Ascending aorta (tissue), 2 donors: ENCODE measurements at regions of chr18 and their contacts with region 1.

Region 1: GRCh38 chr18:44826418-44827259 is 146.0 kb downstream of the SETBP1 start:
- DNase-seq: peak; percentile 15 to 85
- H3K4me3 ChIP-seq: no peak overlapping the region
- H3K27ac ChIP-seq: peak overlapping the region; percentile 73 to 83
- H3K4me1 ChIP-seq: peaks cover 6 to 22% of the 10 kb centered on the region in 2 donors
- H3K27me3 ChIP-seq: no peaks in the 10 kb centered on the region
- CTCF ChIP-seq: no peak

Region 2: GRCh38 chr18:44747157-44747556 is 79.5 kb before region 1 on chr18:
- intact Hi-C with region 1: no loop called
- DNase-seq: no peak
- H3K4me3 ChIP-seq: no peak overlapping the region
- H3K27ac ChIP-seq: peak overlapping the region in 1 of 2 donors; percentile 16
- H3K4me1 ChIP-seq: peaks cover 0 to 17% of the 10 kb centered on the region in 2 donors
- H3K27me3 ChIP-seq: no peaks in the 10 kb centered on the region
- CTCF ChIP-seq: no peak

Region 3: DNA sequence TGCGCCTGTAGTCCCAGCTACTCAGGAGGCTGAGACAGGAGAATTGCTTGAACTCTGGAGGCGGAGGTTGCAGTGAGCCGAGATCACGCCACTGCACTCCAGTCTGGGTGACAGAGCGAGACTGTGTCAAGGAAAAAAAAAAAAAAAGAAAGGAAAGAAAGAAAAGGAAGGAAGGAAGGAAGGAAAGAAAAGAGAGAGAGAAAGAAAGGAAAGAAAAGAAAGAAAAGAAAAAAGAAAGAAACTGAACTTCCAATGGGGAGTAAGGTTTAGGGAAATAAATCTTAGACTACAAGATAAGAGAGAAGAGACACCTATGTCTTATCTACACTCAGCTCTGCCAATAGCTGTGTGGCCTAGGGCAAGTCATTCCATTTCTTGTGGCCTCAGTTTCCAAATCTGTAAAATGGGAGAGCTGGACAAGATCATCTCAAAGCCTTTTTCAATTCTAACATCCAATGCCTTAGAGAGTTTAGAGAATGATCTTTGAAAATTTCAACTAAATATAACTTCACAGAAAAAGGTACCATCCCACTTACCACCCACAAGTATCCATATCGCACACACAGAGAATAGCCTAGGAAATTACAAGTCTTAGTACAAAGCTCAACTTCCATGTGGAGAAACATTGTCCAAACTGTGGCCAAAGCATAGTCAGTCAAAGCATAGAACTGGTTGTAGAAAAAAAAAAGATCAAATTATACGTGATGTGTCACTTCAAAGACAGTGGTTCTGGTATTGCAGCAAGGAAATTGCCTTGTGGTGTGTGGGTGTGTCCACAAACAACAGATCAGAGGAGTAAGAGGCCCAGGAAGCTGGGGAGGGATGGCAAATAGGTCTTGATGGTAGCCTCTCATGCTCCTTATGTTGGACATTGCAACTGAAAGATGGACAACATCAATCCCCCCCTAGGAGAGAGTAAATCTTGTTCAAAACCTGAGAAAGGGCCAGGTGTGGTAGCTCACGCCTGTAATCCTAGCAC is 831.0 kb after region 1 on chr18:
- intact Hi-C with region 1: loop called (anchors 10 kb)
- DNase-seq: no peak
- H3K4me3 ChIP-seq: no peak overlapping the region
- H3K27ac ChIP-seq: peak overlapping the region in 1 of 2 donors; percentile 50
- H3K4me1 ChIP-seq: peaks cover 4 to 22% of the 10 kb centered on the region in 2 donors
- H3K27me3 ChIP-seq: no peaks in the 10 kb centered on the region
- CTCF ChIP-seq: no peak